B cell (primary cell): ENCODE measurements at regions of chr17 and their contacts with region 1.

Region 1: GRCh38 chr17:3004133-3004801 is 59.1 kb downstream of the OR1D5 start:
- DNase-seq: peak; percentile 92
- ATAC-seq: peak; percentile 42
- H3K4me3 ChIP-seq: peak overlapping the region in 4 of 5 experiments; percentile 46 to 56 (median 52)
- H3K4me3 Mint-ChIP-seq: peak overlapping the region; percentile 87
- H3K27ac ChIP-seq: peak overlapping the region; percentile 89 to 96
- H3K27ac Mint-ChIP-seq: peak overlapping the region; percentile 100
- H3K4me1 ChIP-seq: peaks cover 37 to 46% of the 10 kb centered on the region in 2 donors
- H3K4me1 Mint-ChIP-seq: peaks cover 39% of the 10 kb centered on the region
- H3K27me3 ChIP-seq: no peaks in the 10 kb centered on the region
- H3K27me3 Mint-ChIP-seq: no peaks in the 10 kb centered on the region
- CTCF ChIP-seq: no peak

Region 2: DNA sequence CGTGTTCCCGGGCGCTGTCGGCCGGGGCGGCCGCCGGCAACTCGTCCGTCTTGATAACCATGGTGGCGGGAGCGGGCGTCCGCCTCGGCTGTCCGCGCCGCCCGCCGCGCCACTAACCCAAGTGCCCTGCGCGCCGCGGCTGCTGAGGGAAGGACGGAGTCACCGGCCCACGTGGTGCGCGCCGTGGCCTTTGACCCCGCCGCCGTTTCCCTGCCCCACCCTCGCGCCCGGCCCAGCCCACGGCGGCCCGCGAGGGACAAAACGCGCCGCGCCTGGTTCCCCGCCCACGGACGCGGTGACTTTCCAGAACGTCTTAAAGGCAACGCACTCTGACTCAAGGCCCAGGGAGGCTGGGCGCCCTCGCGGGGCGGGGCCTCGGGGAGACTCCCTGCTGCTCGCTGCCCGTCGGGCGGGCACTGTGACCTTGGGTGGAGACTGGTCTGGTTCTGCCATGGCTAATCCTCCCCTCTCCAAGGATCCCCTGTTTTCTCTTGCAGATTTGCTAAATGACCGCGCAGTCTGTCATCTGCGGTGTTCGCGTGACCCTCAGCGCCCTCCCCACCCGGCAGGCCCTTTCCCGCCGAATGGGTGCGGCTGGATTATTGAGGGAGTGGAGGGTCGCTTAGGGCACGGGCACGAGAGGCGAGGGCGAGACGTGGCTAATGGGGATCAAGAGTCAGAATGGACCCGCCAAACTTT is 292.5 kb before region 1 on chr17 and contains the start of gene CLUH:
- CTCF ChIA-PET with region 1: interaction called, 3 read pairs
- POLR2A ChIA-PET with region 1: no interaction called
- intact Hi-C with region 1: loop called (anchors 1 kb)
- DNase-seq: peak; percentile 98
- ATAC-seq: peak; percentile 88
- H3K4me3 ChIP-seq: peak within 1 kb of the TSS; percentile 22 to 95 (median 58)
- H3K4me3 Mint-ChIP-seq: peak within 1 kb of the TSS; percentile 93
- H3K27ac ChIP-seq: peak within 1 kb of the TSS; percentile 46 to 69
- H3K27ac Mint-ChIP-seq: peak within 1 kb of the TSS; percentile 90
- H3K4me1 ChIP-seq: peaks cover 29 to 50% of the 10 kb centered on the region in 2 donors
- H3K4me1 Mint-ChIP-seq: peaks cover 39% of the 10 kb centered on the region
- H3K27me3 ChIP-seq: no peaks in the 10 kb centered on the region
- H3K27me3 Mint-ChIP-seq: no peaks in the 10 kb centered on the region
- CTCF ChIP-seq: no peak
- total RNA-seq, gene CLUH: 53.1 and 78.8 TPM in 2 replicates

Region 3: DNA sequence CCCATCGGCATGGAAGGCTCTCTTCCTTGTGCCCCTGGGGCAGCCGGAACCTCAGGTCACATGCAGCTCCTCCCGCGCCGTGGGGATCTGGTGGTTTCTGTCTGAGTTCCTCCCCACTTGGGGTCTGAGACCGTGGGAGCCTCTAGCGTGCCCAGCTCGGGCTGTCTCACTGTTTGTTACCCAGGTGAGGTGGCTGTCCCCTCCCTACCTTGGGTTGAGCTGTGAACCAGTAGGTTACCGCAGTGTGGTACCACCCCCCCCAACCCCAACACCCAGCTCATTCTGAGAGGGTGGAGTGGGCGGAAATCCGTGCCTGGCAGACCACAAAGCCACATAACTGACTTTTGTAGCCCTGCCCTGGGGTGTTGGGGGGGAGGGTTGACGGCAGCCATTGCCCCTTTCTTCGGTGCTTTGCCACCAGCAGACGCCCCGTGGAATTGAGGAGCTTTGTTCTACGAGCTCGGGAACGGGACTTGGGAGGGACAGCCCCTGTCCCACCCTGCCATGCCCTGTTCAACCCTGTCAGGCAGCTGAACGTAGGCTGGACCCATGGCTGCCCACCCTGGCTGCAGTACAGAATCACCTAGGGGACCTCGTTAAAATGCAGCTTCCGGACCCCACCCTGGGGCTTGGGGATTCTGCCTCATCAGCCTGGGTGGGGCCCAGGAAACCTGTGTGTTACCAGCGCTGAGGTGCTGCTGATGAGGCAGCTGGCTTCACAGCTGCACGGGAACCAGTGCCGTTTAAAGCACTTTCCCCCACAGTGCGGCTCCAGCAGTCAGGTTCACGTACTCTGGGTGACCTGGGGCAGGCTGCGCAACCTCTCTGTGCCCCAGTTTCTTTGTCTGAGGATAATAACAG is 189.6 kb before region 1 on chr17:
- CTCF ChIA-PET with region 1: interaction called, 8 read pairs
- POLR2A ChIA-PET with region 1: interaction called, 5 read pairs
- intact Hi-C with region 1: loop called (anchors 1 kb)
- DNase-seq: peak; percentile 95
- ATAC-seq: peak; percentile 82
- H3K4me3 ChIP-seq: peak overlapping the region in 4 of 5 experiments; percentile 39 to 70 (median 57)
- H3K4me3 Mint-ChIP-seq: peak overlapping the region; percentile 75
- H3K27ac ChIP-seq: peak overlapping the region; percentile 69 to 79
- H3K27ac Mint-ChIP-seq: peak overlapping the region; percentile 93
- H3K4me1 ChIP-seq: peaks cover 24 to 55% of the 10 kb centered on the region in 2 donors
- H3K4me1 Mint-ChIP-seq: peaks cover 44% of the 10 kb centered on the region
- H3K27me3 ChIP-seq: no peaks in the 10 kb centered on the region
- H3K27me3 Mint-ChIP-seq: no peaks in the 10 kb centered on the region
- CTCF ChIP-seq: no peak

Region 4: GRCh38 chr17:2853111-2853721 is 151.1 kb before region 1 on chr17:
- CTCF ChIA-PET with region 1: interaction called, 370 read pairs
- POLR2A ChIA-PET with region 1: interaction called, 3 read pairs
- intact Hi-C with region 1: loop called (anchors 5 kb)
- DNase-seq: peak; percentile 54
- ATAC-seq: peak; percentile 29
- H3K4me3 ChIP-seq: peak overlapping the region in 3 of 5 experiments; percentile 52 to 55 (median 54)
- H3K4me3 Mint-ChIP-seq: peak overlapping the region; percentile 77
- H3K27ac ChIP-seq: no peak overlapping the region
- H3K27ac Mint-ChIP-seq: no peak overlapping the region
- H3K4me1 ChIP-seq: peaks cover 22 to 32% of the 10 kb centered on the region in 2 donors
- H3K4me1 Mint-ChIP-seq: peaks cover 23% of the 10 kb centered on the region
- H3K27me3 ChIP-seq: peaks cover 0 to 64% (median 32%) of the 10 kb centered on the region in 4 experiments
- H3K27me3 Mint-ChIP-seq: peaks cover 38% of the 10 kb centered on the region
- CTCF ChIP-seq: no peak

Region 5: DNA sequence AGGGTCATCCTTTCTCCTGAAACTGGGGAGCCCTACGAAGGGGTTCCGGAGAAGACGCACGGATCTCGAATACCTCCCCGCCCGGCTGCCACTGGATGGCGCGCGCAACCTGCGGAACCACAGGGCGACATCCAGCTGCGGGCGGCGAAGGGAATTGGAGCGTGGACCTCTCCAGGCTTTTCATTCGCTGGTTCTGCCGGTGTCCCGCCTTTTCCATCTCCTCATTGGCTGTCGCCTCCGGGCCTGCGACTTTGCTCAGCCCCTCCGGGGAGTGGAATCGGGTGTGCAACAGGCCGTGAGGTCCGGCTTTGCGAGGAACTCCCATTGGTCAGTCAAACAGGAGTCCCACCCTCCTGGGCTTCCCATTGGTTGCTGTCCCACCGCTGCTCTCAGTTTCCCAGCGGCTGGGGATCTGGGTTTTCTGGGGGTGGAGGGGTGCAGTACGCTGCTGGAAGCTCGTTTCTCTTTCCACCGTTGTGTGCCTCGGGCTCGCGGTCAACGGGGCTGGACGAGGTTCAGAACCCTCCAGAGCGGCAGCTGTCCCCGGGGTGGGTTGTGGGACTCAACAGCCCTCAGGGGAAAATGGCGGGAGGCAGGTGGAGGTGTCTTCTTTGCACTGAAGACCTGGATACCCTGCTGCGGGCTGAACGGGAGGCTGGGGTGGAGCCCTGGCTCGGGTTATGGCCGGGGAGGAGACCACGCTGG is 44.7 kb after region 1 on chr17:
- CTCF ChIA-PET with region 1: no interaction called
- POLR2A ChIA-PET with region 1: interaction called, 3 read pairs
- intact Hi-C with region 1: loop called (anchors 2 kb)
- DNase-seq: peak; percentile 96
- ATAC-seq: peak; percentile 97
- H3K4me3 ChIP-seq: peak overlapping the region; percentile 36 to 84 (median 76)
- H3K4me3 Mint-ChIP-seq: peak overlapping the region; percentile 93
- H3K27ac ChIP-seq: peak overlapping the region in 1 of 2 donors; percentile 7
- H3K27ac Mint-ChIP-seq: peak overlapping the region; percentile 86
- H3K4me1 ChIP-seq: peaks cover 6 to 13% of the 10 kb centered on the region in 2 donors
- H3K4me1 Mint-ChIP-seq: peaks cover 7% of the 10 kb centered on the region
- H3K27me3 ChIP-seq: peaks cover 0 to under 1% (median 0%) of the 10 kb centered on the region in 4 experiments
- H3K27me3 Mint-ChIP-seq: no peaks in the 10 kb centered on the region
- CTCF ChIP-seq: peak; percentile 76